HEK293T (cell line): ENCODE measurements at regions of chr6 and their contacts with region 1.

Region 1: GRCh38 chr6:53986165-53986720 is 125.0 kb upstream of the MLIP start:
- DNase-seq: peak; percentile 38

Region 2: GRCh38 chr6:54244430-54244829 is 258.2 kb after region 1 on chr6:
- CTCF ChIA-PET with region 1: interaction called, 13 read pairs
- POLR2A ChIA-PET with region 1: no interaction called
- DNase-seq: peak; percentile 12

Region 3: GRCh38 chr6:54267798-54268197 is 281.6 kb after region 1 on chr6:
- CTCF ChIA-PET with region 1: interaction called, 20 read pairs
- POLR2A ChIA-PET with region 1: no interaction called
- DNase-seq: peak; percentile 43